BJ (cell line): ENCODE measurements at regions of chr1 and their contacts with region 1.

Region 1: GRCh38 chr1:28235755-28236655 is at the start of gene ATP5IF1:
- DNase-seq: peak; percentile 94
- H3K4me3 ChIP-seq: peak within 1 kb of the TSS; percentile 94
- H3K27me3 ChIP-seq: no peaks in the 10 kb centered on the region
- CTCF ChIP-seq: no peak
- polyA plus RNA-seq, gene ATP5IF1: 168 and 211 TPM in 2 replicates

Region 2: DNA sequence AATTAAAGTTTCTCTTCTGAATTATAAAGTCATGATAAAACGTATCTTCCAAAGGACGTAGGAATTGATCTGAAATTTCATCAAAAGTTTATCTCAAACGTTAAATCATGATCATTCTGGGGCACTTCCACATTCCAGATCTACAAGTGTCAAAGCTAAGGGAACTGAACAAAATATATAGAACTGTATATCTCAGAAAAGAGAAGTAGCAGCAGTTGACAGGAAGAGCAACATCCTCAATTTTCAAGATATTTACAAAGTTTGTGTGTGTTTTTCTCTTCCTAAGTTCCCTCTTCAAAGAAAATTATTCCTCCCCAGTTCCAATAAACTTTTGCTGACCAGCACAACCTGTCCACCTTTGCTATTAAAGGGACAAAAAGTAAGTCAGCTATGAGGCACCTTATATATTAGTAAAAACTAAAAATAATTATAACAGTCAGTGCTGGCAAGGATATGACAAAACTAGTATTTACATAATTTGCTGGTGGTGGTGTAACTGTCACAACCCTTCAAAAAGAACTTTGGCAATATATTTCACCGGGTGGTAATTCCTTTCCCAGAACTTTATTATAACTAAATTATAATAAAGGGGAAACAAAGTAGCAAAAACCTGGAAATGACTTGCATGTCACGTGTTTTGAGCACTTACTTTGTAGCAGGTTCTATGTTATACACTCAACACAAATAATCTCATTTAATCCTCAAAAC is 109.1 kb before region 1 on chr1:
- CTCF ChIA-PET with region 1: no interaction called
- POLR2A ChIA-PET with region 1: interaction called, 10 read pairs
- DNase-seq: no peak
- H3K4me3 ChIP-seq: no peak overlapping the region
- H3K27me3 ChIP-seq: peaks cover 2% of the 10 kb centered on the region
- CTCF ChIP-seq: no peak

Region 3: DNA sequence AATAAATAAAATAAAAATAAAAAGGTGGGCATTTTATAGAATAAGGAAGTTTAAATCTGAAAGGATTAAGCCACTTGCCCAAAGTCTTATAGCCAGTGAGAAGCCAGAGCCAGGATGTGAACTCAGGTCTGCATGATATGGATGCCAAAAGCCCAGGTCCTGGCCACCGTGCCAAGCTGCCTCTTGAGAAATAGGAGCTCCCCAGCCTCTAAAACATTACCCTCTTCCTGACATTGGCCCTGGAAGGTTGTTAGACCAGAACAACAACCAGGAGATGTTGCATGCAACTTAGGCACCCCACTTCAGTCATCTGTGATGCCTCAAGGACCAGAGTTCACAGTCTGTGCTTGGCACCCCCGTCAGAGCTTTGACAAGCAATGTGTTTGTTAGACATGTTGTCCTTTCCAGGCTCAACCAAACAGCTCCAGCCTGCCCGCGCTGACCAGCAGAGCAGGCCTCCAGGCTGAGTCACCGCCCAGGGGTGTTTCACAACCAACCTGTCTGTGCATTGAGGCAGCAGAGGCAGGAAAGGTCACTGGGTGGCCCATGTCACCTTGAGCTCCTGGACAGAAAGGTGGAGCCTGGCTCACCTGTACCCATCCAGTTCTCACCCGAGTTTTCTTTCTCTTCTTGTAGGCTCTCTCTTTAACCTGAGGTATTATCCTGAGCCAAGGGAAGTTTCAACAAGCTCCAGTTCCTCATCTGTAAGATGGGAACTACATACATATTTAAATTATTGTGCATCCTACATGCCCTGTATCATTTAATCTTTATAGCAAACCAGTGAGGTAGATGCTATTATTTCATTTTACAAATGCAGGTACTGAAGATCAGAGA is 77.9 kb after region 1 on chr1:
- CTCF ChIA-PET with region 1: no interaction called
- POLR2A ChIA-PET with region 1: interaction called, 10 read pairs
- DNase-seq: no peak
- H3K4me3 ChIP-seq: no peak overlapping the region
- H3K27me3 ChIP-seq: peaks cover 1% of the 10 kb centered on the region; the same call in 1 of the 2 replicates
- CTCF ChIP-seq: no peak

Region 4: DNA sequence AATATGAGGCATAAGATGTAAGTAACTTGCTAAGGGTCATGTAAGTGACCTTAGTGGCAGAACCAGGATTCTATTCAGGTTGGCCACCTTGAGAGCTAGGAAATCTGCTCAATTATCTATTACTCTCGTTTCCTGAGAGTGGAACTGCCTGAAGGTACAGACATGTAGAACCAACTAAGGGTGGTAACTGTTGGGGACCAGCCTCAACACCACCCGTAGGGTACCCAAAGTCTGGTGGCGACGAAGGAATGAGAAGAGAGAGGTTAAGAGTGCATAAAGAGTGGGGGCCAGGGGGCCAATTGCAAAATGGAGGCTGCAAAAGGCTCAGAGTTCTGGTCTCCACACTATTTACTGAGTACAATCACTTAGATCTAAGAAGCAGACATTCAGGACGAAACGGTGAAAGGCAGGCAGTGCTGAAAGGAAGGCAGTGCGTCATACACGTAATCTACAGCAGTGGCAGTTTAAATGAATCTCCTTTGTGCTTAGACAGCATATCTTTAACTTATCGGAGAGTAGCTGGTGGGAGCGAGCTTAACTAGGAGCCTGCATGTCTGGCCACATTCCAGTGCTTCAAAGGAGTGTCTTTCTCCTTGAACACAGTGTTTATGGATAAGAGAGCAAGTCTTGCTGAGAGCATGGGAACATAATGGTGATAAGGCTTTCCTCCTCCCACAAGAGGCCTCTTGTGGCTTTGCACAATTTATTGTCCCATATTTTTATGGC is 920.7 kb after region 1 on chr1:
- CTCF ChIA-PET with region 1: no interaction called
- POLR2A ChIA-PET with region 1: no interaction called
- DNase-seq: no peak
- H3K4me3 ChIP-seq: no peak overlapping the region
- H3K27me3 ChIP-seq: no peaks in the 10 kb centered on the region
- CTCF ChIP-seq: no peak